A673 (cell line): ENCODE measurements at regions of chr7 and their contacts with region 1.

Region 1: DNA sequence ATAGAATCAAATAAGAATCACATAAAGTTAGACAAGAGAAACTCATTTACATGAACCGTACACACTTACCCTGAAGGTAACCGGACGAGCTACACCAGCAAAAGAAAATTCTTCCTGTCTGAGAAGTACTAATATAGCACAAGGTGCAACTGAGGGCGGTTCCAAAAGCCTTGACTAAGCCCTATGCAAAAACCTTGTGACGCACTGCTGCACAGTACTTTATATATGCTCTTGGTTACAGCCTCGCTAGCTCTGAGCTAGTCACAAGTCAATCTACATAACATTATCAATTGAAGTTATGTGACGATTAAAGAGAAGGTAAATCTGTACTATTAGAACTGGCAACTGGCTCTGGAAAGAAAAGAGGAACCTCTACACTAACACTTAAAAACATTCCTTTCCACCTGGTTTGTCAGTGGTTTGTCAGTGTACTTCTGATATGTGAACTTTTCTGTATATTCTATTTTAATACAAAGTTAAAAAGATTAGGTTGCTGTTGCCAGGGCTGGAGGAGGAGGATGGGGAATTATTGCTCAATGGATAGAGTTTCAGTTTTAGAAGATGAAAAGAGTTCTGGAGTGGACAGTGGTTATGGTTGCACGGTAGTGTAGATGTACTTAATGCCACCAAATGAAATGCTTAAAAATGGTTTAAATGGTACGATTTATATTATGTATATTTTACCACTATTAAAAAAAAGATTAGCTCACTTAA is 21.6 kb downstream of the NT5C3A start:
- DNase-seq: peak; percentile 38
- H3K4me3 ChIP-seq: peak overlapping the region; percentile 20
- H3K27ac ChIP-seq: no peak overlapping the region
- H3K4me1 ChIP-seq: peaks cover 71% of the 10 kb centered on the region
- H3K27me3 ChIP-seq: no peaks in the 10 kb centered on the region
- CTCF ChIP-seq: no peak

Region 2: DNA sequence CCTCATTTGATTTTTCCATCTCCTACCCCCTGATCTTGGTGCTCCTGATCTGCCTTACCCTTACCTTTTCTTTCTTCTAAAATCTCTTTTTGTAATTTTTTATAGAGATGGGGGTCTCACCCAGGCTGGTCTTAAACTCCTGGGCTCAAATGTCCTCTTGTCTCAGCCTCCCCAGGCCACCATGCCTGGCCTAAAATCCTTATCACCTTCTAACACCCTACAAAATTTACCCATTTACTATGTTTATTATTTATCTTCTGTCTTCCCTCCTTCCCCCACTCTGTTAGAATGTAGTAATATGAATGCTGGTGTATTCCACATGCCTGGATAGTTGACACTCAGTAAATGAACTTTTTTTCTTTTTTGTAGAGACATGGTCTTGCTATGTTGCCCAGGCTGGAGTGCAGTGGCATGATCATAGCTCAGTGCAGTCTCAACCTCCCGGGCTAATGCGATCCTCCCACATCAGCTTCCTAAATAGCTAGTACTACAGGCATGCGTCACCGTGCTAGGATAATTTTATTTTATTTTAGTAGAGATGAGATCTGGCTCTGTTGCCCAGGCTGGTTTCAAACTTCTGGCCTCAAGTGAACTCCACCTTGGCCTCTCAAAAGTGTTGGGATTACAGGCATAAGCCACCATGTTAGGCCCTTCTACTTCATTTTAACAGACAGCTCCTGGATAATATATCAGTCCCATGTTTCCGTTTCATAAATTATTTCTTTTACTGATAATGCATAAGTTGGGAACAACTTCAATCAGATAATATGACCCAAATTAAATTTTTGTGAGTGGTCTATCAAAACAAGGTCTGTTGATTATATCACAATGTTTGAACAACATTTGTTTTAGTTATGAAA is 409.1 kb before region 1 on chr7:
- CTCF ChIA-PET with region 1: no interaction called
- POLR2A ChIA-PET with region 1: no interaction called
- intact Hi-C with region 1: no loop called
- DNase-seq: no peak
- H3K4me3 ChIP-seq: no peak overlapping the region
- H3K27ac ChIP-seq: no peak overlapping the region
- H3K4me1 ChIP-seq: no peaks in the 10 kb centered on the region
- H3K27me3 ChIP-seq: no peaks in the 10 kb centered on the region
- CTCF ChIP-seq: no peak

Region 3: GRCh38 chr7:32942786-32943653 is 97.9 kb before region 1 on chr7:
- CTCF ChIA-PET with region 1: no interaction called
- POLR2A ChIA-PET with region 1: no interaction called
- intact Hi-C with region 1: loop called (anchors 10 kb)
- DNase-seq: peak; percentile 92
- H3K4me3 ChIP-seq: peak overlapping the region; percentile 86
- H3K27ac ChIP-seq: peak overlapping the region; percentile 91
- H3K4me1 ChIP-seq: peaks cover 7% of the 10 kb centered on the region
- H3K27me3 ChIP-seq: no peaks in the 10 kb centered on the region
- CTCF ChIP-seq: peak; percentile 60